Ascending aorta (tissue), 2 donors: ENCODE measurements at regions of chr2 and their contacts with region 1.

Region 1: GRCh38 chr2:25276569-25277465 is 64.9 kb downstream of the DNMT3A start:
- DNase-seq: peak in 1 of 2 donors; percentile 84
- H3K4me3 ChIP-seq: peak overlapping the region; percentile 47 to 58
- H3K27ac ChIP-seq: peak overlapping the region; percentile 70 to 84
- H3K4me1 ChIP-seq: peaks cover 0 to 10% of the 10 kb centered on the region in 2 donors
- H3K27me3 ChIP-seq: no peaks in the 10 kb centered on the region
- CTCF ChIP-seq: peak; percentile 77 to 93 (median 85)

Region 2: DNA sequence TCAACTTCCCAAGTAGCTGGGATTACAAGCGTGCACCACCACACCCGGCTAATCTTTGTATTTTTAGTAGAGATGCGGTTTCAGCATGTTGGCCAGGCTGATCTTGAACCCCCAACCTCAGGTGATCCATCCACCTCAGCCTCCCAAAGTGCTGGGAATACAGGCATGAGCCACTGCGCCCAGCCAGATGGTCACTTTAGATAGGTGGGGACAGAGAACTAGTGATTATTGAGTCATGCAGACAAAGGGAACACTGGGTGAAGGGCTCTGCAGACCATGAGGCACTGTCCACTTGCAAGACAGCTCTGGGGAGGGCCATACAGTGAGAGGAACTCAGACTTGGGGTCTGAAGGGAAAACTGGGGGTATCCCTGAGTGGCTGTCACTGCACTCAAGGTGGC is 50.0 kb before region 1 on chr2:
- intact Hi-C with region 1: no loop called
- DNase-seq: no peak
- H3K4me3 ChIP-seq: no peak overlapping the region
- H3K27ac ChIP-seq: no peak overlapping the region
- H3K4me1 ChIP-seq: peaks cover 8 to 9% of the 10 kb centered on the region in 2 donors
- H3K27me3 ChIP-seq: no peaks in the 10 kb centered on the region
- CTCF ChIP-seq: no peak

Region 3: GRCh38 chr2:25294573-25295462 is 18.0 kb after region 1 on chr2:
- intact Hi-C with region 1: loop called (anchors 2 kb)
- DNase-seq: peak; percentile 71 to 91
- H3K4me3 ChIP-seq: peak overlapping the region; percentile 43
- H3K27ac ChIP-seq: peak overlapping the region; percentile 89 to 93
- H3K4me1 ChIP-seq: peaks cover 18 to 47% of the 10 kb centered on the region in 2 donors
- H3K27me3 ChIP-seq: no peaks in the 10 kb centered on the region
- CTCF ChIP-seq: peak in 1 of 3 experiments; percentile 17

Region 4: GRCh38 chr2:25420820-25421237 is 144.0 kb after region 1 on chr2:
- intact Hi-C with region 1: no loop called
- DNase-seq: no peak
- H3K4me3 ChIP-seq: no peak overlapping the region
- H3K27ac ChIP-seq: no peak overlapping the region
- H3K4me1 ChIP-seq: no peaks in the 10 kb centered on the region
- H3K27me3 ChIP-seq: no peaks in the 10 kb centered on the region
- CTCF ChIP-seq: no peak

Region 5: GRCh38 chr2:25437881-25438662 is 161.3 kb after region 1 on chr2:
- intact Hi-C with region 1: no loop called
- DNase-seq: no peak
- H3K4me3 ChIP-seq: no peak overlapping the region
- H3K27ac ChIP-seq: no peak overlapping the region
- H3K4me1 ChIP-seq: no peaks in the 10 kb centered on the region
- H3K27me3 ChIP-seq: no peaks in the 10 kb centered on the region
- CTCF ChIP-seq: no peak

Region 6: DNA sequence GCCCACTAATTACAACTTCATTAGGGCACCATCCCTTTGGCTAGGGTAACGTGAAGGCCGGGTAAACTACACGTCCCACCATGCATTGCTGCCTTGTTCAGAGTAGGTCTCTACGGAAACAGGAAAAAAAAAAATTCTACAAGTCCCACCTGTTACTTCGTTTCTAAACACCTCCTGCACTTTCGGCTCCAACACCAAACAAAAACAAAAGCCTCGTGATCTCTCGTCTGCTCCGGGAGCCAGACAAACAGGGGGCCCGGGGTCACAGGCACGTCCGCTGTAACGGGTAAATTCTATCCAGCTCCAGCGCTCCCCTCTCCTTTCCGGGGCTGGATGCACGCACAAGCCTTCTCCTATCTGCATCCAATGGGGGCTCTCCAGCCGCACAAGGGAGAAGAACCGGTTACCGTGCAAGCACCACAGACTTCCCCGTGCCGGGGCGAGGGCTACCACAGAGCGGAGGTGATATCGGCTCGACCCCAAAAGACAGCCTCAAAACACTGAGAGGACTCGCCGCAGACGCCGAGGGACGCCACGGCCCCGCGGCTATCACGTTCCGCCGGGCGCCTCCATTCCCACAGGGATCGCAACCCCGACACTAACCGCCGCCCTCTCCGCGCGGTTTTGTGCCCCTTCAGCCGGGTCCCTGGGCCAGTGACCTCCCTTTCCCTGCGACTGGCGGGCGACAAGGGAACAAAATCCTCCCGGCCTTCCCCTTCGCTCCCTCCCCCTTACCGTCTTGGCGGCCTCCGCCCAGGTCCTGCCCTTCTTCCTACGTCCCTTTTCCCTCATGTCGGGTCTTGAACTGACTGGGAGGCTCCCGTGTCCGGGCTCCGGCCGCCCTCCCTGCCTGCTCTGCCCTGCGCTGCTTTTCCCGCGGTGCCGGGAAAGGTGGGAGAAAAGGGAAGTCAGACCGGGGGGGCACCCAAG is 600.9 kb after region 1 on chr2:
- intact Hi-C with region 1: no loop called
- DNase-seq: peak in 1 of 2 donors; percentile 69
- H3K4me3 ChIP-seq: peak overlapping the region; percentile 70 to 77
- H3K27ac ChIP-seq: peak overlapping the region; percentile 81 to 90
- H3K4me1 ChIP-seq: peaks cover 0 to 10% of the 10 kb centered on the region in 2 donors
- H3K27me3 ChIP-seq: no peaks in the 10 kb centered on the region
- CTCF ChIP-seq: no peak